ENCODE measurements at regions of chr10 and their contacts with region 1.

Region 1: DNA sequence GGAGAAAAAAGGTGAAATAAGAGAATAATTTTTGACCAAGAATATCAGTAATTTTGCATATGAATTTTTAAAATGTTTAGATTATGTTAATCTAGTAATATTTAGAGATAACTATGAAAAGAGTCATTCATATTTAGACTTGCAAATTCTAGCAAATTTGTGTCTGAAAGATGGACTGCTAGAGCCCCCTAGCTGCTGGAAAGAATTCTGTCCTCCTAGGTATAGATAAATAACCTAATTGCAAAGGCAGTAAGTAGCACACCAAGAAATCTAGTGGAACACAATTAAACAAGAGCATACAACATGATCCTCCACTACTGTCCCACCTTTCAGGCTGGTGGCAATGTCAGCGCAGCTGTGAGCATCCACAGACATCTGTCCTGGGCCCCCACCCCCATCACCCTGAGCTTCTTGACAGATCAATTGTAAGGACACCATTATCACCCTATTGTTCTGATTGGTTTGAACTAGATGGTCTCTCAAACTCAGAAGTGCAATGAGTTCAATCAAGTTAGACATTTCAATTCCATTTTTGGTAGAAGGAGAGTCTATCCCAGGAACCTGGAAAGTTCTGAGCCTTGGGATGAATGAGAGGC is 15.0 kb upstream of the GFRA1 start:
- DNase-seq: no peak
- ATAC-seq: peak; percentile 62; the same call in 2 of the 3 replicates
- H3K4me3 ChIP-seq: no peak overlapping the region
- H3K27ac ChIP-seq: no peak overlapping the region
- H3K4me1 ChIP-seq: no peaks in the 10 kb centered on the region
- H3K27me3 ChIP-seq: no peaks in the 10 kb centered on the region
- CTCF ChIP-seq: peak; percentile 41 to 53 (median 51); a peak in 5 of 6 replicates
- EP300 ChIP-seq: no peak
- POLR2A ChIP-seq: no peak
- RAD21 ChIP-seq: peak; percentile 71

Region 2: DNA sequence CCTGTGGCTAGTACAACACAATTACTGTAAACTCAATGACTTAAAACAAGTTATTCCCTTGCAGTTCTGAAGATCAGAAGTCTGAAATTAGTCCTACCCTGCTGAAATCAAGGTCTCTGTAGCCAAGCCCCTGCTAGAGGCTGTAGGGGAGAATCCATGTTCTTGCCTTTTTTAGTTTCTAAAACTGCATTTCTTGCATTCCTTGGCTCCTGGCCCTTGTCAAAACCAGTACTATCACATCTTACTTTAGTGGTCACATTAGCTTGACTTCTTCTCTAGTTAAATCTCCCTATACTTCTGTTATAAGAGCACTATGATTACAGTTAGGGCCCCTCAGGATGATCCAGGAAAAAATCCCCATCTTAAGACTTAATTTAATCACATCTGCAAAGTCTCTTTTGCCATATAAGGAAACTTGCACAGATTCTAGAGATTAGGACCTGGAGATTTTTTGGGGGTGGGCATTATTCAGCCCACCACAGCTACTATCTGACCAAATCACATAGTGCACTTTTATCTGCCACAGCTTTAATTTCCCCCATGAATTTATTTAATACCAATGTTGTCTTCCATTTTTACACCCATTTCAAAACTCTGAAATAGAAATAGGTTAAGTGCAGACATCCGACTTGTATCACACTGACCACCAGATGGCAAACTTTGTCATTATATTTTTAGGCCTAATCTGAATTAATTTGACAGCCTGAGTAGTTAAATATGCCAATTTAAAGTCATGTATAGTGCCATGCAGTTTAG is 581.8 kb before region 1 on chr10:
- CTCF ChIA-PET with region 1: interaction called, 20 read pairs
- POLR2A ChIA-PET with region 1: no interaction called
- RAD21 ChIA-PET with region 1: interaction called, 6 read pairs
- SMC1A ChIA-PET with region 1: interaction called, 12 read pairs
- in situ Hi-C with region 1: no loop called
- intact Hi-C with region 1: loop called (anchors 1 kb)
- DNase-seq: no peak
- ATAC-seq: peak; percentile 51; the same call in 2 of the 3 replicates
- H3K4me3 ChIP-seq: no peak overlapping the region
- H3K27ac ChIP-seq: no peak overlapping the region
- H3K4me1 ChIP-seq: no peaks in the 10 kb centered on the region
- H3K27me3 ChIP-seq: no peaks in the 10 kb centered on the region
- CTCF ChIP-seq: peak; percentile 7 to 47 (median 27); a peak in 3 of 6 replicates
- EP300 ChIP-seq: no peak
- POLR2A ChIP-seq: no peak
- RAD21 ChIP-seq: peak; percentile 38

Region 3: DNA sequence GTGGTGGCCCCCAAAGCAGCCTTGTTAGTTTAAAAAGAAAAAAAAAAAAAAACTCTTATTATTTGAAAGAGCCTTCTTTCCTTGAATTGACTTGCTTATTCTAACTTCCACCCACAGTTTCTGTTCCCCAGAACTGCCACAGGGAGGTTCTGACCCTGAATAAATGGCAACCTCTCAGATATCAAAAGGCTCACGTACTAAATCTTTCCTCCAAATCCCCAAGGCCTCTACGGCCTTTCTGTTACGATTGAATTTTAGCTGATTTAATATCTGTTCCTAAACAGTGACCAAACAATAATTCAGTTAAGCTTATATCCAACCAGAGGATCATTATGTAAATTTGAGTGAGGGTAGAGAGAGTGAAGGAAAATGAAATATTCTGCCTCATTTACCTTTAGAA is 497.8 kb before region 1 on chr10:
- CTCF ChIA-PET with region 1: no interaction called
- POLR2A ChIA-PET with region 1: no interaction called
- RAD21 ChIA-PET with region 1: no interaction called
- SMC1A ChIA-PET with region 1: no interaction called
- in situ Hi-C with region 1: loop called (anchors 10 kb)
- intact Hi-C with region 1: no loop called
- DNase-seq: no peak
- ATAC-seq: no peak
- H3K4me3 ChIP-seq: no peak overlapping the region
- H3K27ac ChIP-seq: no peak overlapping the region
- H3K4me1 ChIP-seq: no peaks in the 10 kb centered on the region
- H3K27me3 ChIP-seq: no peaks in the 10 kb centered on the region; a peak in 1 of 4 replicates
- CTCF ChIP-seq: no peak
- EP300 ChIP-seq: no peak
- POLR2A ChIP-seq: no peak
- RAD21 ChIP-seq: no peak

Region 4: DNA sequence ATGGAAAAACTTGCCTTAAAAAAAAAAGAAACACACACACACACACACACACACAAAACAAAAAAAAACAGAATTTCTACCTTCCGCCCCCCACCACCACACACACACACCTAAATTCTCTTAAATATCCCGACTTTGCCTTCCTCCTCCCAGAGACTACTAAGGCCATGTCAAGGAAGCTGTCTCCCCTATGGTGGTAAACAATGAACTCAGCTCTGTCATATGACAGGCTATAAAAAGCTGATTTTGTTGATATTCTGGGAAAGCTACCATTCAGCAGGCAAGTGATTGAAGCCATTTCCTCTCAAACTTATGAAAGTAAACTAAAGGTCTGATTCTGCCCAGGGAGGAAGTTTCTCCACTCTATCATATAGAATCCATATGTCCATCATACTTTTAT is 486.0 kb before region 1 on chr10:
- CTCF ChIA-PET with region 1: interaction called, 17 read pairs
- POLR2A ChIA-PET with region 1: no interaction called
- RAD21 ChIA-PET with region 1: interaction called, 7 read pairs
- SMC1A ChIA-PET with region 1: interaction called, 5 read pairs
- in situ Hi-C with region 1: loop called (anchors 10 kb)
- intact Hi-C with region 1: loop called (anchors 1 kb)
- DNase-seq: no peak
- ATAC-seq: no peak
- H3K4me3 ChIP-seq: no peak overlapping the region
- H3K27ac ChIP-seq: no peak overlapping the region
- H3K4me1 ChIP-seq: no peaks in the 10 kb centered on the region
- H3K27me3 ChIP-seq: no peaks in the 10 kb centered on the region
- CTCF ChIP-seq: no peak
- EP300 ChIP-seq: no peak
- POLR2A ChIP-seq: no peak
- RAD21 ChIP-seq: no peak

Region 5: DNA sequence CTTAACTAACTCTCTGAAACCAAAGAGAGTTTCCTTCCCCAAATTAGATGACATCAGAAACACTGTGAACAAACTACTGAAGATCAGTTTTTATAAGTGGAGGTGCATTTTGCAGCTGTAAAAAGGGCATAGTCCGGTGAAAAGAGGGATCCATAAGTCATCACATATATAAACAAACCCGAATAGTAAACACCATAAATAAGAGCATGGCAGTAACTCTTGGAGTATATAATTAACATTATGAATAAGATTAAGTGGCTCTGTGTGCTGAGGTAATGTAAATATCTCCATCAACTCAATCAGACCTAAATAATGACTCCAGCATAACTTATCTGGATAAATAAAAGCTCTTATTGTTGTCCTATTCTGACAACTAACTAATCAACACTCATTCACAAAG is 759.9 kb after region 1 on chr10:
- CTCF ChIA-PET with region 1: no interaction called
- POLR2A ChIA-PET with region 1: no interaction called
- RAD21 ChIA-PET with region 1: no interaction called
- SMC1A ChIA-PET with region 1: no interaction called
- in situ Hi-C with region 1: no loop called
- intact Hi-C with region 1: no loop called
- DNase-seq: no peak
- ATAC-seq: no peak
- H3K4me3 ChIP-seq: no peak overlapping the region
- H3K27ac ChIP-seq: no peak overlapping the region
- H3K4me1 ChIP-seq: no peaks in the 10 kb centered on the region
- H3K27me3 ChIP-seq: no peaks in the 10 kb centered on the region
- CTCF ChIP-seq: no peak
- EP300 ChIP-seq: no peak
- POLR2A ChIP-seq: no peak
- RAD21 ChIP-seq: no peak